Activated naive CD4-positive, alpha-beta T cell treated with anti-CD3 and anti-CD28 coated beads for 36 hours (primary cell): ENCODE measurements at regions of chr5 and their contacts with region 1.

Region 1: DNA sequence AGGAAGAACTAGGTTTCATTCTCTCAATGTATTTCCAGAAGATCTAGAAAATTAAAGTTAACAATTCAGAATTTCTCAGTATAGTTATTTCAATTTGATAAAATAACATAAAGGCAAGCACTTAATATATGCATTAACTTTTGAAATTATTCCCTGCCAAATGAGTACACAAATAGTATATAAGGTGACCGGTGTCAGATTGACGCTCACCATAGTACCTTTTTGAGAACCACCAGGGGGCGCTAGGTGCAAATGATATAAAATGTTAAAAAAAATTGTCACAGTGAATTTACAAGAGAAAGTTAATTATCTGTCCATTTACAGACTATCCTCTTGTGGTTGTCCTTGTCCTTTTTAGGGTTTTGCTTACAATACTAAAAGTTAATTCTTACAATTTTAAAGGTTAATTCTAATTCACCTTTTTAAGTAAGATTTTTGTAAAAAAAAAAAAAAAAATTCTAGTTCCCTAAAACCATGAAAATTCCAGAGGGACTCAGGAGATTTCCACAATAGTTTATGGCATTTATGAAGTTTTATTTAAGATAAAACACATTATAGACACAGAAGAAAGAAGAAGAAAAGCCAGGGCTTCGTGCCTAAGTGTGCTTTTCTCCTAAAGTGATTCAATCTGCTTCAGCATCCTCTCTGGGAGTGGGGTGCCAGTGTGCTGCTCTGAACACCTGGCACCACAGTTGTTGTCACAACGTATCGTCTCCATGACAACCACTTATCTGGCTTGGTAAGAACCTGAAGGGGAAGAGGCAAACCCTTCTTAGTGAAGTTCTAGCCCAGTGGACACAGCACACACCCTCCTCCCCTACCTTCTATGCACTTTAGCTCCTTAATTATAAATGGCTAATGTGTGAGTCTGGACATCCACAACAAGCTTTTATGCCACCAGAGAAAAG is 1.7 kb downstream of the ADAMTS16 start:
- DNase-seq: peak; percentile 71
- H3K4me3 Mint-ChIP-seq: no peak overlapping the region
- H3K27ac Mint-ChIP-seq: no peak overlapping the region
- H3K4me1 Mint-ChIP-seq: peaks cover 10% of the 10 kb centered on the region
- H3K27me3 Mint-ChIP-seq: peaks cover 26% of the 10 kb centered on the region

Region 2: DNA sequence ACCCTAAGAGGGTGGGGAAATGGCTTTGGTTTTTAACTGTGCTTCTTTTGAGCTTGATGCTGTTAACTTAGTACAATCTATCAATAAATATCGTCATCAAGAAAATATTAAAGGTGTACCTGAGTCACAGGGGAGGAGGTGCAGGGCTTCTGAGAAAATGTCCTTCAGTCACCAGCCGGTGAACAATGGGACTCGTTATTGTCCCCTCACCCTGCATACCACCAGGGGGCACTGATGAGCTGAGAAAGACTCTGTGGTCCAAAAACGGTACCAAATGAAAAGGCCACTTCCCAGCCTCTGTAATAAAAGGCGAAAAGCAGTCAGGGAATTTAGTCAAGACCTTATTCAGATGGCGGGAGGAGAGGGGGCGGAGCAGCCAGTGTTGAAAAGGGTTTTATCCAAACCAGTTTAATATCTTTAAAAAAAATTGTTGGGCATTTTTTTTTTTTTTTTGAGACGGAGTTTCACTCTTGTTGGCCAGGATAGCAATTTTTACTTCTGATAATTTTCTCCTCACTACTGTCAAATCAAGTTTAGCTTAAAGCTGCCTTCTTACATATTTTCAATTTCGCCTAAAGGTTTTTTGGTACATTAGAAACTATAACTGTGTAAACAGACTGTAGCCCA is 273.7 kb before region 1 on chr5:
- CTCF ChIA-PET with region 1: no interaction called
- intact Hi-C with region 1: loop called (anchors 1 kb)
- DNase-seq: peak; percentile 68
- H3K4me3 Mint-ChIP-seq: no peak overlapping the region
- H3K27ac Mint-ChIP-seq: no peak overlapping the region
- H3K4me1 Mint-ChIP-seq: no peaks in the 10 kb centered on the region
- H3K27me3 Mint-ChIP-seq: no peaks in the 10 kb centered on the region

Region 3: GRCh38 chr5:5398046-5398445 is 256.2 kb after region 1 on chr5:
- CTCF ChIA-PET with region 1: no interaction called
- intact Hi-C with region 1: loop called (anchors 1 kb)
- DNase-seq: no peak
- H3K4me3 Mint-ChIP-seq: no peak overlapping the region
- H3K27ac Mint-ChIP-seq: no peak overlapping the region
- H3K4me1 Mint-ChIP-seq: no peaks in the 10 kb centered on the region
- H3K27me3 Mint-ChIP-seq: no peaks in the 10 kb centered on the region

Region 4: DNA sequence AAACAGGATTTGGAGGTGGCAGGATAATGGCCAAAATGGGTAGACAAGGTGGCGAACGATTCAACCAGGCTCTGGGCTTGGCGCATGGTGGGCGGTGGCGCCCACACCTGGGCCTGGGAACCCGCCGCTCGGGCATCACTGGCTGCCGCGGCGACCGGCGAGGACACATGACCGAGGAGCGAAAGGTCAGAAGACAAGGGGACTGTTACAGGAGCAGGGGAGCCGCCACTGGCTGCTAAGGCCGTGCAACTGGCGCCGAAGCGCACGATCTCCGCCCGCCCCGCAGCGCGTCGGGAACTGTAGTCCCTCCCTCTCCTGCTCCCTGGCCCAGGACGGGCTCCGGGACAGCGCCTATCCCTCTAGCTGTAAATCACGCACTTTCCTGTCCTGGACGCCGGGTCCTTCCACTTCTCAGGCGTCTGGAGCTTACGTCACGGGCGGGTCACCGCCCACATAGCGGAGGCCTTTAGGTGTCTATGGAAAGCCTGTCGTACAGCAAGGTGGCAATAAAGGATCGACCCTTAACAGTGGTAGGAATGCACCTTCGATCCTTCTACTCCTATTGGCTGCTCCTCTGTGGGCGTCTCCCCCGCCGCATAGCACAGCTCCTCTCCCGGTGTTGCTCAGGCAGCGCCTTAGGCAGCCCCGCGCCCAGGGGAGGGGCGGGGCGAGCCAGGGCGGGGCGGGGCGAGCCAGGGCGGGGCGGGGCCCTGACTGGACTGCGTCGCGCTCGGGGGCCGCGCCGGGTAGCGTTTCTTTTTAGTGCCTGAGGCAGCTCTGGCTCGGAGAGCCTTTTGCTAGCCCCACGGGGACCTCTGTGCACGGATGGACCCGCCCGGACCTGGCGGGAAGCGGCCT is 280.3 kb after region 1 on chr5 and contains the start of gene ICE1:
- CTCF ChIA-PET with region 1: interaction called, 12 read pairs
- intact Hi-C with region 1: loop called (anchors 1 kb)
- DNase-seq: peak; percentile 95
- H3K4me3 Mint-ChIP-seq: peak within 1 kb of the TSS; percentile 95
- H3K27ac Mint-ChIP-seq: peak within 1 kb of the TSS; percentile 91
- H3K4me1 Mint-ChIP-seq: peaks cover 19% of the 10 kb centered on the region
- H3K27me3 Mint-ChIP-seq: no peaks in the 10 kb centered on the region
- total RNA-seq, gene ICE1: 19.1 to 20.6 TPM

Region 5: GRCh38 chr5:5886812-5887486 is 745.1 kb after region 1 on chr5:
- CTCF ChIA-PET with region 1: no interaction called
- intact Hi-C with region 1: loop called (anchors 5 kb)
- DNase-seq: peak; percentile 49
- H3K4me3 Mint-ChIP-seq: no peak overlapping the region
- H3K27ac Mint-ChIP-seq: no peak overlapping the region
- H3K4me1 Mint-ChIP-seq: peaks cover 2% of the 10 kb centered on the region
- H3K27me3 Mint-ChIP-seq: peaks cover 28% of the 10 kb centered on the region

Region 6: GRCh38 chr5:6576861-6577501 is 1435.1 kb after region 1 on chr5:
- CTCF ChIA-PET with region 1: no interaction called
- intact Hi-C with region 1: loop called (anchors 10 kb)
- DNase-seq: peak; percentile 44
- H3K4me3 Mint-ChIP-seq: no peak overlapping the region
- H3K27ac Mint-ChIP-seq: no peak overlapping the region
- H3K4me1 Mint-ChIP-seq: no peaks in the 10 kb centered on the region
- H3K27me3 Mint-ChIP-seq: peaks cover 20% of the 10 kb centered on the region